Psoas muscle (tissue), 8 donors: ENCODE measurements at regions of chr16 and their contacts with region 1.

Region 1: DNA sequence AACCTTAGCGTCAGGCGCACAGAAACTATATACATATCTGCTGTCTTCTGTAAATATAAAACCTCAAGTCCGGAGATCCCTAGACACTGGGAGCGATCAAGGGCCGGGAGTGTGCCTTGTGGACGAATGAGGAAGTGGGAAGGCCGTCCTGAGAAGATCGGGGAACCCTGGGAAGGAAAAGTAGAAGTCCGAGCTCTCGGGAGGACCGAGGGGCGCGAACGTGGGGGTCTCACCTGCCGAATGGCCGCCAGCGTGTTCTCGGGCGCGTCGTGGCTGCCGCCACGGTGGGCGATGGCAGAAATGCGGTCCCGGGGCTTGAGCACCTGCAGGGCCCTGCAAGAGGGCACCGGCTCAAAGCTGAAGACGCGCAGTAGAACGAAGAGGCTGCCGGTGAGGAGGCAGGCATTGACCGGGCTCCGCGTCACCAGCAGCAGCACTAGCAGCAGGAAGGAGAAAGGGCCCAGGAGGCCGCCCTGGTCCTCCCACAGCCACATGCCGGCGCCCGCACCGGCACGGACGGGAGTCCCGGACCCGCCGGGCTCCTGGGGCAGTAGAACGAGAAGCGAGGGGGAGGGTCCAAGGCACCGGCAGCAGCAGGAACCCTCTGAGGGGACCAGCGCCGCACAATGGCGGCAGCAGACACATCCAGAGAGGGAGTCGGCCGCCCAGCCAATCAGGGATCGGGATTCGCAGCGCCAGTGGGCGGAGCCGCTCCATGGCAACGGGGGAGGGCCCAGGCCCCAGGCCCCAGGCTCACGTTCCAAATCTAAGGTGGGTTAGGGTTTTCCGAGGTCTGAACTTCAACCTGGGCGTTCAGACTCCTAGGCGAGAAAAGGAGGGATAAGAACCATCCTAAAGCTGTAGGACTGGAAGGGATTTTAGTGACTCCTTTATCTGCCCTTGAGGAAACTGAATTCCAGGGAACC is at the start of gene GDE1:
- DNase-seq: peak; percentile 94 to 96
- ATAC-seq: peak; percentile 90 to 93 (median 92)
- H3K4me3 ChIP-seq: peak within 1 kb of the TSS; percentile 80
- H3K27ac ChIP-seq: peak within 1 kb of the TSS; percentile 86
- H3K4me1 ChIP-seq: peaks cover 33% of the 10 kb centered on the region
- H3K27me3 ChIP-seq: no peaks in the 10 kb centered on the region
- CTCF ChIP-seq: peak; percentile 40
- total RNA-seq, gene GDE1: 50.0 to 66.3 (median 54.4) TPM

Region 2: GRCh38 chr16:19555162-19555937 is 33.6 kb after region 1 on chr16 and contains the start of gene VPS35L:
- intact Hi-C with region 1: loop called in 1 of 2 experiments (anchors 2 kb)
- DNase-seq: peak; percentile 99 to 100
- ATAC-seq: peak; percentile 97 to 99 (median 98)
- H3K4me3 ChIP-seq: peak within 1 kb of the TSS; percentile 90
- H3K27ac ChIP-seq: peak within 1 kb of the TSS; percentile 93
- H3K4me1 ChIP-seq: peaks cover 5% of the 10 kb centered on the region
- H3K27me3 ChIP-seq: no peaks in the 10 kb centered on the region
- CTCF ChIP-seq: peak; percentile 80
- total RNA-seq, gene VPS35L: 27.8 to 34.6 (median 32.4) TPM

Region 3: DNA sequence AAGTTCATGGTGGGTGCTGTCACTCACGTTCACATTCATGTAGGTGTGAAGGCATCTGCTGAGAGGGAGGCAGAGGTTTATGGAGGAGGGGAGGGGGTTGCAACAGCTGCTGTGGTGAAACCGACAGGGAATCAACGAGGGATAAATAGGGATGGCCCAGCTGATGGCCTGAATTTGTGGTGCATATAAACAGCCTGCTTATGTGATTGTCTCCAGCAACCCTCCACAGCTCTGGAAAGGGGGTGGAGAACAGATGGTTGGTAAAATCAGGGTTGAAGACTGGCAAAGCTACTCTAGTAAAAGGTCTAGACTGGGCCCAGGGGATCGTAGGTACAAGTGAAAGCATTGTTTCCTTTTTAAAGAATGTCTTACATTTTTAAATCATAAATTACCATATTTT is 250.1 kb after region 1 on chr16:
- intact Hi-C with region 1: no loop called
- DNase-seq: no peak
- ATAC-seq: no peak
- H3K4me3 ChIP-seq: no peak overlapping the region
- H3K27ac ChIP-seq: no peak overlapping the region
- H3K4me1 ChIP-seq: no peaks in the 10 kb centered on the region
- H3K27me3 ChIP-seq: no peaks in the 10 kb centered on the region
- CTCF ChIP-seq: no peak